Mammary epithelial cell (primary cell): ENCODE measurements at regions of chr1 and their contacts with region 1.

Region 1: GRCh38 chr1:226148121-226148648 is 38.4 kb downstream of the ACBD3 start:
- DNase-seq: no peak
- H3K4me3 ChIP-seq: no peak overlapping the region
- H3K27ac ChIP-seq: no peak overlapping the region
- H3K4me1 ChIP-seq: no peaks in the 10 kb centered on the region
- H3K27me3 ChIP-seq: no peaks in the 10 kb centered on the region
- CTCF ChIP-seq: no peak

Region 2: DNA sequence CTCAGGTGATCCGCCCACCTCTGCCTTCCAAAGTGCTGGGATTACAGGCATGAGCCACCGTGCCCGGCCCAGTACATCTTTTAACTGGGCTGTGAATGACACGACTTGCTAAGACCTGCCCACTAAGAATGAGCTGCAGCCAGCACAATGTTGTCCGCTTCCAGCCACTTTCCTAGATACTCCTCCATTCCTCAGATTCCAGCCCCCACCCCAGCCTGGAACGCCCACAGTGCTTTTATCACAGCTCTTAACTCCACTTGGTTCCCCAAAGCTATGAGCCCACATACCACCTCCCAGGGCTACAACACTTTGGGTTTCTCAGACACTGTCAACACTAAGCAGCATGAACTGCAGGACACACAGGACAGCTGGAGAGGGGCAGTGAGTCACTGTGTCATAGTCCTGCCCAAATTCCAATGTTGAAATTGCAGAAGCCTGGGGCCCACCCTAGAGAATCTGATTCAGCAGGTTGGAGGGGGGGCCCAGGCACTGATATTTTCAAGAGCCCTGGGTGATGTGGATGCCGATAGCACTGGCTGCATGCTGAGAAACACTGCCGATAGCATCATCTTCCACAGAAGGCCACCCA is 19.6 kb before region 1 on chr1:
- CTCF ChIA-PET with region 1: no interaction called
- dilution Hi-C with region 1: no loop called
- in situ Hi-C with region 1: no loop called
- intact Hi-C with region 1: loop called (anchors 2 kb)
- DNase-seq: peak; percentile 74
- H3K4me3 ChIP-seq: no peak overlapping the region
- H3K27ac ChIP-seq: no peak overlapping the region
- H3K4me1 ChIP-seq: peaks cover 42% of the 10 kb centered on the region
- H3K27me3 ChIP-seq: no peaks in the 10 kb centered on the region
- CTCF ChIP-seq: no peak